HepG2 (cell line): ENCODE measurements at regions of chr1 and their contacts with region 1.

Region 1: GRCh38 chr1:8121261-8122170 is 95.4 kb upstream of the ERRFI1 start:
- DNase-seq: peak; percentile 91
- ATAC-seq: peak; percentile 63
- H3K4me3 ChIP-seq: peak overlapping the region in 1 of 3 experiments; percentile 21; a peak in 3 of 6 replicates
- H3K27ac ChIP-seq: peak overlapping the region; percentile 97
- H3K4me1 ChIP-seq: peaks cover 72% of the 10 kb centered on the region
- H3K27me3 ChIP-seq: no peaks in the 10 kb centered on the region
- CTCF ChIP-seq: no peak
- EP300 ChIP-seq: no peak
- POLR2A ChIP-seq: peak; percentile 39 to 50; a peak in 2 of 4 replicates
- RAD21 ChIP-seq: no peak

Region 2: DNA sequence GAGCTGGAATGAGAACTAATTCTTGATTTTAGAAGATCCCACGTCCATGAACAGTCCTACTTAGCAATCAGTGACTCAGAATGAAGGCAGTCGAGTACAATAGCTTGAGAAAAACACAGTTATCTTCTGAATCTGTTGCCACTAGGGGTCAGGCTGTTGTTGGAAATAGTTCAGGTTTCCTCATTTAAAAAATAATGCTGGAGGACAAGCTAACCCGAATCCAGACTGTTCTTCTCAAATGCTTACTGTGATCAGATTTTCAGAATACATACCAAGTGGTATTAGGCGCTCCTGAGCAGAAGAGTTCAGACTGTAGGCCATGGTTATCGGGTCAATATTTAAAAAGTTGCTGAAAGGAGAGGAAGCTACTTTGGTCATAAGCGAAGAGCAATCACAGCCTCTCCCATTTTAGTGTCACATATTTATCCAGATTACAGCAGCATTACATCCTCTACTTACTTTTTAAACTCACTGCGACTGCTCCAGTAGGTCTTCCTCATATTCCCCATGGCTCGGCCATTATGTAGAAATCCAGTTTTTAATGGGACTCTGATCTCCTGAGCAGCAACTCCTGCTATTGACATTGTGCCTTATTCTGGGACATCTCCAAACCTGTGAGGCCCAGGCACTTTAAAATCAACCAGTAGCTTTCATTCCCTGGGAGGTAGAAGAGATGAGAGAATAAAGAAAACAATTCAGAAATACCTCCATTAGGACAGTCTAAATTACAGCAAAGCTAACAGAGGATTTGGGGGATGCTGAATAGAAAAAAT is 106.3 kb before region 1 on chr1:
- CTCF ChIA-PET with region 1: no interaction called
- POLR2A ChIA-PET with region 1: interaction called, 12 read pairs
- in situ Hi-C with region 1: no loop called
- intact Hi-C with region 1: no loop called
- DNase-seq: peak; percentile 66
- ATAC-seq: peak; percentile 18; the same call in 2 of the 3 replicates
- H3K4me3 ChIP-seq: no peak overlapping the region; a peak in 1 of 6 replicates
- H3K27ac ChIP-seq: peak overlapping the region; percentile 28
- H3K4me1 ChIP-seq: peaks cover 80% of the 10 kb centered on the region
- H3K27me3 ChIP-seq: no peaks in the 10 kb centered on the region
- CTCF ChIP-seq: peak; percentile 50; the same call in 1 of the 2 replicates
- EP300 ChIP-seq: 0 out of 4 replicates have a peak, but pooled peaks of 1 of the 2 experiments have one; percentile 12
- POLR2A ChIP-seq: peak; percentile 40 to 45; a peak in 3 of 4 replicates
- RAD21 ChIP-seq: peak; percentile 54; the same call in 1 of the 2 replicates

Region 3: GRCh38 chr1:8077120-8077573 is 44.4 kb before region 1 on chr1:
- CTCF ChIA-PET with region 1: no interaction called
- POLR2A ChIA-PET with region 1: interaction called, 34 read pairs
- in situ Hi-C with region 1: no loop called
- intact Hi-C with region 1: no loop called
- DNase-seq: peak; percentile 93
- ATAC-seq: peak; percentile 99
- H3K4me3 ChIP-seq: peak overlapping the region; percentile 36 to 50 (median 47); a peak in 5 of 6 replicates
- H3K27ac ChIP-seq: peak overlapping the region; percentile 57
- H3K4me1 ChIP-seq: peaks cover 89% of the 10 kb centered on the region
- H3K27me3 ChIP-seq: no peaks in the 10 kb centered on the region
- CTCF ChIP-seq: 0 out of 2 replicates have a peak, but pooled peaks have one; percentile 10
- EP300 ChIP-seq: peak in 1 of 2 experiments; percentile 62; a peak in 2 of 4 replicates
- POLR2A ChIP-seq: peak; percentile 22 to 55; a peak in 1 of 4 replicates
- RAD21 ChIP-seq: peak; percentile 26; the same call in 1 of the 2 replicates

Region 4: GRCh38 chr1:8137481-8138244 is 16.1 kb after region 1 on chr1:
- CTCF ChIA-PET with region 1: no interaction called
- POLR2A ChIA-PET with region 1: interaction called, 45 read pairs
- in situ Hi-C with region 1: no loop called
- intact Hi-C with region 1: no loop called
- DNase-seq: peak; percentile 68
- ATAC-seq: peak; percentile 47; the same call in 1 of the 3 replicates
- H3K4me3 ChIP-seq: peak overlapping the region in 1 of 3 experiments; percentile 32; a peak in 2 of 6 replicates
- H3K27ac ChIP-seq: peak overlapping the region; percentile 30
- H3K4me1 ChIP-seq: peaks cover 74% of the 10 kb centered on the region
- H3K27me3 ChIP-seq: no peaks in the 10 kb centered on the region
- CTCF ChIP-seq: no peak
- EP300 ChIP-seq: peak in 1 of 2 experiments; percentile 27; a peak in 1 of 4 replicates
- POLR2A ChIP-seq: no peak
- RAD21 ChIP-seq: no peak

Region 5: GRCh38 chr1:8169364-8170058 is 48.0 kb after region 1 on chr1:
- CTCF ChIA-PET with region 1: no interaction called
- POLR2A ChIA-PET with region 1: interaction called, 24 read pairs
- in situ Hi-C with region 1: no loop called
- intact Hi-C with region 1: loop called (anchors 5 kb)
- DNase-seq: peak; percentile 93
- ATAC-seq: peak; percentile 90
- H3K4me3 ChIP-seq: peak overlapping the region in 1 of 3 experiments; percentile 42; a peak in 2 of 6 replicates
- H3K27ac ChIP-seq: peak overlapping the region; percentile 97
- H3K4me1 ChIP-seq: peaks cover 76% of the 10 kb centered on the region
- H3K27me3 ChIP-seq: no peaks in the 10 kb centered on the region
- CTCF ChIP-seq: no peak
- EP300 ChIP-seq: peak in 1 of 2 experiments; percentile 86; a peak in 2 of 4 replicates
- POLR2A ChIP-seq: peak in 1 of 2 experiments; percentile 43; a peak in 3 of 4 replicates
- RAD21 ChIP-seq: no peak

Region 6: DNA sequence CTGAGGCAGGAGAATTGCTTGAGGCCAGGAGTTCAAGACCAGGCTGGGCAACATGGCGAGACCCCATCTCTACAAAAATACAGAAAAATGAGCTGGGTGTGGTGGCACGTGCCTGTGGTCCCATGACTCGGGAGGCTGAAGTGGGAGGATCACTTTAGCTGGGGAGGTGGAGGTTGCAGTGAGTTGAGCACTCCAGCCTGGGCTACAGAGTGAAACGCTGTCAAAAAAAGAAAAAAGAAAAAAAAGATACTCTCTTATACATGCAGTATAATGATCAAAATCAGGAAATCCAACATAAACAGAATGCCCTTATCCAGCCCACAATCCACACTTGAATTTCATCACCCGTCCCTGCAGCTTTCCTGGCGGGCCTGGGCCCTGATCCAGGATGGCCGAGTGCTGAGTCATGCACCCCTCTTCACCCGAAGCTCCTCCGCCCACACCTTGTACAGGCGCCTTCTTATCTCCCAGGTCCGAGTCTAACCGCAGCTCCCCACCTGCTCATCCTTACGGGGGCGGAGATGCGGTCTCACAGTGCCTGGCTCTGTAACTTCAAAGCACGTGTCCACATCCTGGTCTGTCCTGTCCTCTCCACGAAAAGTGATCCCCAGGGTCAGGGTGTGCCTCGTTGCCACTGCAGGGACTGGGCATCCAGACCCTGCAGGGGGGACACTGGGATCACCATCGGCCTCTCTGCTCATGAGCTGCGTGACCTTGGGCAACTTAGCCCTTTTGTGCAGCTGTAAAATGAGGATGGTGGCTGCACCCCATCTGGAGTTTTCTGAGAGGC is 76.2 kb after region 1 on chr1:
- CTCF ChIA-PET with region 1: no interaction called
- POLR2A ChIA-PET with region 1: interaction called, 12 read pairs
- in situ Hi-C with region 1: no loop called
- intact Hi-C with region 1: no loop called
- DNase-seq: peak; percentile 83
- ATAC-seq: peak; percentile 35
- H3K4me3 ChIP-seq: no peak overlapping the region
- H3K27ac ChIP-seq: peak overlapping the region; percentile 61
- H3K4me1 ChIP-seq: peaks cover 91% of the 10 kb centered on the region
- H3K27me3 ChIP-seq: no peaks in the 10 kb centered on the region
- CTCF ChIP-seq: 0 out of 2 replicates have a peak, but pooled peaks have one; percentile 3
- EP300 ChIP-seq: peak; percentile 71 to 95; a peak in 3 of 4 replicates
- POLR2A ChIP-seq: no peak
- RAD21 ChIP-seq: no peak

Region 7: GRCh38 chr1:8259498-8260290 is 138.2 kb after region 1 on chr1:
- CTCF ChIA-PET with region 1: no interaction called
- POLR2A ChIA-PET with region 1: interaction called, 8 read pairs
- in situ Hi-C with region 1: no loop called
- intact Hi-C with region 1: loop called (anchors 1 kb)
- DNase-seq: peak; percentile 89
- ATAC-seq: peak; percentile 69
- H3K4me3 ChIP-seq: peak overlapping the region; percentile 31 to 53 (median 32)
- H3K27ac ChIP-seq: peak overlapping the region; percentile 91
- H3K4me1 ChIP-seq: peaks cover 74% of the 10 kb centered on the region
- H3K27me3 ChIP-seq: no peaks in the 10 kb centered on the region
- CTCF ChIP-seq: no peak
- EP300 ChIP-seq: peak; percentile 24 to 89; a peak in 3 of 4 replicates
- POLR2A ChIP-seq: no peak
- RAD21 ChIP-seq: no peak

Region 8: GRCh38 chr1:8472668-8473067 is 351.2 kb after region 1 on chr1:
- CTCF ChIA-PET with region 1: no interaction called
- POLR2A ChIA-PET with region 1: no interaction called
- in situ Hi-C with region 1: no loop called
- intact Hi-C with region 1: no loop called
- DNase-seq: no peak
- ATAC-seq: no peak
- H3K4me3 ChIP-seq: no peak overlapping the region
- H3K27ac ChIP-seq: no peak overlapping the region
- H3K4me1 ChIP-seq: peaks cover 53% of the 10 kb centered on the region
- H3K27me3 ChIP-seq: no peaks in the 10 kb centered on the region
- CTCF ChIP-seq: no peak
- EP300 ChIP-seq: no peak
- POLR2A ChIP-seq: no peak
- RAD21 ChIP-seq: no peak